ENCODE measurements at regions of chr3 and their contacts with region 1.

Region 1: GRCh38 chr3:181278468-181279238 is 289.1 kb upstream of the DNAJC19 start:
- DNase-seq: peak; percentile 31
- H3K4me3 ChIP-seq: no peak overlapping the region
- H3K27ac ChIP-seq: no peak overlapping the region
- H3K4me1 ChIP-seq: no peaks in the 10 kb centered on the region; a peak in 1 of 4 replicates
- H3K27me3 ChIP-seq: no peaks in the 10 kb centered on the region
- CTCF ChIP-seq: peak; percentile 42
- EP300 ChIP-seq: no peak
- RAD21 ChIP-seq: peak; percentile 81

Region 2: DNA sequence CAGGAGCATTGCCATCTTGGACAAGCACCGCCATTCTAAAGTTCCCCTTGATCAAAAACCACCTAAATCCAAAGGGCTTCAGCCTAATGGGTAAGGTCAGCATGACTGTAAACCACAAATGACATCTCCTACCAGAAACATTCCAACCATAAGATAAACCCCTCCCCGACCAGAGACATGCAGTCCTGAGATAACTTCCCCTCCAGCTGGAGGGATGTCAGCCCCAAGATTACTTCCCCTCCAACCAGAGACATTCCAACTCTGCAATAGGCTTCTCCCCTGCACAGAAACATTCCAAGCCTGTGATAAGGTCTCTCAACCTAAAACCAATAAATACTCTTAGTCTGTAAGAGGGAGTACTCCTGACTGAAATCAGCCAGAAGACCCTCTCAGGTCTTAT is 226.4 kb before region 1 on chr3:
- CTCF ChIA-PET with region 1: no interaction called
- POLR2A ChIA-PET with region 1: no interaction called
- DNase-seq: no peak
- H3K4me3 ChIP-seq: no peak overlapping the region
- H3K27ac ChIP-seq: no peak overlapping the region
- H3K4me1 ChIP-seq: no peaks in the 10 kb centered on the region
- H3K27me3 ChIP-seq: no peaks in the 10 kb centered on the region
- CTCF ChIP-seq: no peak
- EP300 ChIP-seq: no peak
- RAD21 ChIP-seq: no peak

Region 3: DNA sequence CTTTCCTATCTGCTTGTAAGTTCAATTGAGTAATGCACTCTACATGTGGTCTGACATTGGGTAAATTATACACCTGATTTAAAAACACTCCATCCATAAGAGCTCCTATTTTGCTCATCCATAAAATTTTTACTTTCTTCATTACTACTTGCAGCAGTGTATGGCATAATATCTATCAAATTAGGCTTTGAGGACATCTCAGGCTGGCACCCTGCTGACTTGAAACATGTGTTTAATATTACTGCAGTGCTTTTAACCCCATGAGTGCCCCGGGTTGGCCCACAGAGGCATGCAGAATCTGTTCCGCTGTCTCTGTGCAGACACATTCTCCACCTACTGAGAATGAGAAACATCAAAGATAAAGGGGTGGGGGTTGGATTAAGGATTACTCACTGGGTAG is 39.2 kb before region 1 on chr3:
- CTCF ChIA-PET with region 1: interaction called, 14 read pairs
- POLR2A ChIA-PET with region 1: no interaction called
- DNase-seq: peak; percentile 57
- H3K4me3 ChIP-seq: no peak overlapping the region
- H3K27ac ChIP-seq: no peak overlapping the region; a peak in 1 of 4 replicates
- H3K4me1 ChIP-seq: peaks cover 0 to 6% of the 10 kb centered on the region in 2 experiments; a peak in 2 of 4 replicates
- H3K27me3 ChIP-seq: no peaks in the 10 kb centered on the region
- CTCF ChIP-seq: no peak
- EP300 ChIP-seq: no peak
- RAD21 ChIP-seq: no peak

Region 4: GRCh38 chr3:181302960-181303359 is 24.3 kb after region 1 on chr3:
- CTCF ChIA-PET with region 1: interaction called, 11 read pairs
- POLR2A ChIA-PET with region 1: no interaction called
- DNase-seq: no peak
- H3K4me3 ChIP-seq: no peak overlapping the region
- H3K27ac ChIP-seq: no peak overlapping the region
- H3K4me1 ChIP-seq: peaks cover 0 to 3% of the 10 kb centered on the region in 2 experiments; a peak in 1 of 4 replicates
- H3K27me3 ChIP-seq: no peaks in the 10 kb centered on the region
- CTCF ChIP-seq: no peak
- EP300 ChIP-seq: peak in 1 of 2 experiments; percentile 66; a peak in 2 of 4 replicates
- RAD21 ChIP-seq: no peak

Region 5: GRCh38 chr3:181700168-181701087 is 421.8 kb after region 1 on chr3:
- CTCF ChIA-PET with region 1: interaction called, 54 read pairs
- POLR2A ChIA-PET with region 1: no interaction called
- DNase-seq: peak; percentile 87
- H3K4me3 ChIP-seq: peak overlapping the region in 1 of 2 experiments; percentile 8; a peak in 1 of 4 replicates
- H3K27ac ChIP-seq: no peak overlapping the region
- H3K4me1 ChIP-seq: peaks cover 0 to 11% of the 10 kb centered on the region in 2 experiments; a peak in 2 of 4 replicates
- H3K27me3 ChIP-seq: no peaks in the 10 kb centered on the region
- CTCF ChIP-seq: peak; percentile 87
- EP300 ChIP-seq: no peak
- RAD21 ChIP-seq: peak; percentile 87

Region 6: DNA sequence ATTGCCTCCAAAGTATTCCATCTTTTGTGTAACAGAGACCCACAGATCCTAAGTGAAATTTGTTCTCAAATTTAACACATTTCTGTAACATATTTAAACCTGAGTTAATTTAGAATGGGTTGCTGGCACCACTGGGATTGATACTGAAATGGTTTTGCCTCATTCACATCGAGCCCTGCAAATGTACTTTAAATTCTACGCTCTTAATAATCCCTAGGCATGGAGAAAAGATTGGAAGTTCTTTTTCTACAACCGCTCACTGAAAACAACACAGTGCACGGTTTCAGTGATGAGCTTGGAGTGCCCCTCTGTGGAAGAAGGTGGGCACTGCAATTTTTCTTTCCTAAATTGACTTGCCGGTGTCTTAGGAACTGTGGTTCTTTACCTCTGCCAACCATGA is 1404.8 kb after region 1 on chr3:
- CTCF ChIA-PET with region 1: interaction called, 21 read pairs
- POLR2A ChIA-PET with region 1: no interaction called
- DNase-seq: peak; percentile 75
- H3K4me3 ChIP-seq: no peak overlapping the region; a peak in 1 of 4 replicates
- H3K27ac ChIP-seq: no peak overlapping the region
- H3K4me1 ChIP-seq: no peaks in the 10 kb centered on the region; a peak in 1 of 4 replicates
- H3K27me3 ChIP-seq: no peaks in the 10 kb centered on the region
- CTCF ChIP-seq: peak; percentile 96
- EP300 ChIP-seq: no peak
- RAD21 ChIP-seq: peak; percentile 98